ENCODE measurements at regions of chr2 and their contacts with region 1.

Region 1: DNA sequence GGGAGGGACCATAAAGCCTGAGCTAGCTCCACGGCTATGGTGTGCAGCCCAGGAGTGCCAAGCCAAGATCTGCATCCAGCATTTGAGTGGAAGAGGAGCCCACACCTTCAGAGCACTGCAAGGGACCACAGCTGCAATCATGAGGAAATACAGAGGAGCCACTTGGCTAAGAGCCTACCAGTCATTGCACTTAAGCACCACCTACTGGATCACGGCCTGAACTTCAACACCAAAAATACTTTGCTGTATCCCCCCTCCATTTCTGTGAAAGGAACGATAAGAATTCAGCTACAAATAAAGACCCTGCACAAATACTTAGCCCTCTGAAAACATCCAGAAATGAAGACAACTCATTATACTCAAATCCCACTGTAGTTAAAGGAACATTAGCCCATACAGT is 545.3 kb downstream of the TSN start:
- ATAC-seq: no peak
- H3K4me3 ChIP-seq: no peak overlapping the region
- H3K27ac ChIP-seq: no peak overlapping the region
- H3K4me1 ChIP-seq: peaks cover 0 to 7% of the 10 kb centered on the region in 2 donors

Region 2: GRCh38 chr2:122203523-122203922 is 97.2 kb before region 1 on chr2:
- in situ Hi-C with region 1: loop called in 1 of 9 experiments (anchors 25 kb)
- ATAC-seq: peak in 6 of 8 experiments; percentile 33 to 92 (median 69)
- H3K4me3 ChIP-seq: no peak overlapping the region
- H3K27ac ChIP-seq: no peak overlapping the region
- H3K4me1 ChIP-seq: peaks cover 0 to 3% of the 10 kb centered on the region in 2 donors